WTC11 (cell line): ENCODE measurements at regions of chr4 and their contacts with region 1.

Region 1: GRCh38 chr4:108030332-108030731 is 40.6 kb downstream of the HADH start:
- DNase-seq: peak; percentile 55
- ATAC-seq: peak; percentile 96
- H3K4me3 Mint-ChIP-seq: no peak overlapping the region
- H3K27ac Mint-ChIP-seq: peak overlapping the region; percentile 16; the same call in 1 of the 2 replicates
- H3K4me1 Mint-ChIP-seq: no peaks in the 10 kb centered on the region
- H3K27me3 Mint-ChIP-seq: no peaks in the 10 kb centered on the region
- CTCF ChIP-seq: 0 out of 2 replicates have a peak, but pooled peaks have one; percentile 34

Region 2: DNA sequence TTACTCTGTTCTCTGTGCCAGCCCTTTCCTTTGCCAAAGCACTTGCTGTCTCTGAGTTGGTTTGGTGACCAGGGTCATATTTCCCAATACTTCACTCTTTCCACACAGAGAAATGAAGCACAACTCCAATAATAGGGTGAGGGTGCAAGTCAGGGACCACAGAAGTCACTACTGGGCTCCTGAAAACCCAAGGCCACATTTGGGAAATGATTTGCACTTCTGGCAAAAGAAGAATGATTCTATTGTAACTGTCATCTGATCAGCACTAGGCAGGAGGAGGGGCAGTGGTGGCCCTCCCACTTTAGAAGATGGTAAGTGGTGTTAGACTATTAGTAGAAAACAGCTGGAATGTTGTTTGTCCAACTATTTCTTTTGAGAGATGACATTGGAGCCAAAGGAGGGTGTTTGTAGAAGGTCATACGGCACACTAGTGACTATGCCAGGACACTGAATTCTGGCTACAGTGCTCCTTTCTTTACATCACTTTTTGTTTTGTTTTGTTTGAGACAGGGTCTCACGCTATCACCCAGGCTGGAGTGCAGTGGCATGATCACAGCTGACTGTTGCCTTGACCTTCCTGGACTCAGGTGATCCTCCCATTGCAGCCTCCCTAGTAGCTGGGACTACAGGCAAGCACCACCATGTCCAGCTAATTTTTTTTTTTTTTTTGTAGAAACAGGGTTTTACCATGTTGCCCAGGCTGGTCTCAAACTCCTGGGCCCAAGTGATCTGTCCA is 51.4 kb before region 1 on chr4:
- CTCF ChIA-PET with region 1: no interaction called
- POLR2A ChIA-PET with region 1: no interaction called
- DNase-seq: no peak
- ATAC-seq: no peak
- H3K4me3 Mint-ChIP-seq: no peak overlapping the region
- H3K27ac Mint-ChIP-seq: no peak overlapping the region
- H3K4me1 Mint-ChIP-seq: no peaks in the 10 kb centered on the region
- H3K27me3 Mint-ChIP-seq: no peaks in the 10 kb centered on the region
- CTCF ChIP-seq: no peak

Region 3: DNA sequence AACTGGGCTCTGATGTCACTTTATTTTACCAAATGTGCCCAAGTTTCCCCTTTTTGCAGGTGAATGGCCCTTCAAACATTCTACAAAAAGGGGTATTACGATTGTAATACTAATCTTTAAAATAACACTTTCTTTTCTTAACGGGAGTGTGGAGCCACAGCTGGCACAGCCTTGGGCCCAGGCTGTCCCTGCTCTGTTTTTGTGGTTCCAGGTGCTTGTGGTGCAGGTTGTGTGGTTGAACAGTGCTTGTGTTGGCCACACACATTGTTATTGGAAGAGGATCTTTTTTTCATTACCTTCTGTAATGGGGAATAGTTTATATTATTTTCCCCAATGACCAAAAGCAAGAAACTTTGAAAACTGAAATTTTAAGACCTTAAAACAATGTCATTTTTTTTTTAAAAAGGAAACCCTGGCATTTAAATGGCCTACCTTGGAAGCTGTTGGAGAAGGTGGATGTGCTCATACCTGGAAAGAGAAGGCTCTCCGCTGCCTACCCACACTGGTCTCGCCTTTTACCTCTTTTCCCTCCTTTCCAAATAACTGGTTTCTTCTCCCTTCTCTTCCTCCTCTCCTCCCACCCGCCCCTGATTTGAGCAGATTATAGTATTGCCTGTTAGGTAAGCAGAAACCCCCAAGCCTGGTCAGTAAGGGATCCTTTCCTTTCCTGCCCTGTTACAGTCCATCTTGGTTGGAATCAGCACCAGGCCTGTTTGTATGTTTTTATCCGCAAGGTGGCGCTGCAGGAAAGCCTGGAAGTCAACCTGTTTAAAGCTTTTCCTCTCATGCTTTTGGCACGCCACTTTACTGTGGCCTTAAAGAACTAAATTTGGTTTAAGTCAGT is 12.1 kb before region 1 on chr4:
- CTCF ChIA-PET with region 1: interaction called, 11 read pairs
- POLR2A ChIA-PET with region 1: no interaction called
- DNase-seq: peak; percentile 84
- ATAC-seq: peak; percentile 91
- H3K4me3 Mint-ChIP-seq: no peak overlapping the region
- H3K27ac Mint-ChIP-seq: no peak overlapping the region
- H3K4me1 Mint-ChIP-seq: peaks cover 9% of the 10 kb centered on the region
- H3K27me3 Mint-ChIP-seq: no peaks in the 10 kb centered on the region
- CTCF ChIP-seq: peak; percentile 81

Region 4: DNA sequence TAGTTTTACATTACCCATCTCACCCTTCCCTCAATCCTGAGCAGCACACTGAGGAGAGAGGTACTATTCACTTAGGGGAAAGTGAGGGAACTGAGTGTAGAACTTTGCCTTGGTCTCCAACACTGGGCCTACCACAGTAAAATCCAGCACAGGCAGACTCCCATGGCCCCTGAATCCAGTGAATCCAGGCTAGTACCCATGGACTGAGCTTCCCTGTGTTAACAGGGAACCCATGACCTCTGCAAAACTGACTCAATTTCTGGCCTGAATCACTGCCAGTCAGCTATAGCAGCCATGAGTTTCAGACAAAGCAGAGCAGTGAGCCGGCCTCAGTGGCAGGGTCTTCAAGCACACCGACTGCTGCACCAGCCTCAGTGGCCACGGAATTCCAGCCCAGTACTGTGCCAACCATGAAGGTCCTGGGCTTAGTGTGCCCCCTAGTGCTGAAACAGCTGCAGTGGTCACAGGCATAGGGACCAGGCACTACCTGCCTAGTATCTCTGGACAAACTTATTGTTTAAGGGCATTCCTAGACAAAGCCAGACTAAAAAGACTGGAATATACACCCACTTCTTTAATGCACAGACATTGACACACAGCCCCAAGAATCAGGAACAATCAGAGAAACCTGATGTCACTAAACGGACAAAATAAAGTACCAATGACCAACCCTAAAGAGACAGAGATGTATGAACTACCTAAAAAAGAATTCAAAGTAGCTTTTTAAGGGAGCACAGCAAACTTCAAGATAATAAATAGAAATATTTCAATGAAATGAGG is 462.7 kb after region 1 on chr4:
- CTCF ChIA-PET with region 1: interaction called, 12 read pairs
- POLR2A ChIA-PET with region 1: no interaction called
- DNase-seq: peak; percentile 81
- ATAC-seq: peak; percentile 100
- H3K4me3 Mint-ChIP-seq: no peak overlapping the region
- H3K27ac Mint-ChIP-seq: no peak overlapping the region
- H3K4me1 Mint-ChIP-seq: no peaks in the 10 kb centered on the region
- H3K27me3 Mint-ChIP-seq: no peaks in the 10 kb centered on the region; the same call in 1 of the 2 replicates
- CTCF ChIP-seq: peak; percentile 82